ENCODE measurements at regions of chr12 and their contacts with region 1.

Region 1: DNA sequence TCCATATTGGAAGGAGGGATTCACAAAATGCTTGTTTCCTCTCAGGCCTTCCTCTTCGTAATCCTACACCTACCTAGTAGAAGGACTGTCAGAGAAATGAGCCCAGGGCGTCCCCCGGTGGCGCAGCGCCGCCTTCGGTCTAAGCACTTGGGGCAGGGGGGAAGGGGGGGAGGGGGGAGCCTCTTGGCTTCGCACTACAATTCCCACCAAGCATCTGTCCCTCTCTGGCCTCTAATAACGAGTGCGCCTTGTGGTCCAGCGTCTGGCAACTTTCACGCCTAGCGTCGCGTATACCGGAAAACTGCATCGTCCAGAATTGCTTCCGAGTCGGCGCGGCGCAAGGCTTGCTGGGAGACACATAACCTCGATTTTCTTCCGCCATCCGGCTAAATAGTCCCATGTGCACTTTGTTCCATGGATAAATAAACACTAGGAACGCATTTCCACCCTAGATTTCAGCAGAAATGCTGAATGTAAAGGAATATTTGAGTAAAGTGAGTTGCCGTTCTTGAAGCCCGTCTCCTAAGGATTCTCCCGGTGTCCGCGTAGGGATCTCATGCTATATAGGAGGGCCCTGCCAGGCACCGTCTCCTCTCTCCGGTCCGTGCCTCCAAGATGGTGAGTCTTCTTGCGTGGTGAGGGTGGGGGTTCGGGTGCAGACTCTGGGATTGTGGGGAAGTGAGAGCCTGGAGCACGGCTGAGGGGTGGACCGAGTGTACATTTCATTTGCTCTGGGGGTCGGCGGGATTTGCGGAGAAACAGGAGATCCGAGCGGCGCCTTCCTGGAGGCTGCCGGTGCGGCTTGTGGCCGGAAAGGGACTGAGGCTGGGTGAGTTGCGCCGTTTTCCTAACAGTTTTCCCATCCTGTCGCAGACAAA is at the start of gene RPS26:
- DNase-seq: peak; percentile 94
- H3K4me3 Mint-ChIP-seq: peak within 1 kb of the TSS; percentile 95
- H3K27ac Mint-ChIP-seq: peak within 1 kb of the TSS; percentile 93
- H3K4me1 Mint-ChIP-seq: peaks cover 44% of the 10 kb centered on the region
- H3K27me3 Mint-ChIP-seq: no peaks in the 10 kb centered on the region
- total RNA-seq, gene RPS26: 43.9 and 45.2 TPM in 2 replicates

Region 2: GRCh38 chr12:55817346-55818139 is 224.2 kb before region 1 on chr12 and contains the starts of genes ORMDL2 and SARNP:
- intact Hi-C with region 1: loop called (anchors 5 kb)
- DNase-seq: peak; percentile 98
- H3K4me3 Mint-ChIP-seq: no peak within 1 kb of the TSS
- H3K27ac Mint-ChIP-seq: peak within 1 kb of the TSS; percentile 43
- H3K4me1 Mint-ChIP-seq: peaks cover 28% of the 10 kb centered on the region
- H3K27me3 Mint-ChIP-seq: no peaks in the 10 kb centered on the region
- total RNA-seq, gene ORMDL2: 58.6 and 59.2 TPM in 2 replicates
- total RNA-seq, gene SARNP: 78.3 and 82.2 TPM in 2 replicates

Region 3: GRCh38 chr12:55973598-55974307 is 68.0 kb before region 1 on chr12 and contains the start of gene RAB5B:
- intact Hi-C with region 1: loop called (anchors 1 kb)
- DNase-seq: peak; percentile 99
- H3K4me3 Mint-ChIP-seq: no peak within 1 kb of the TSS
- H3K27ac Mint-ChIP-seq: no peak within 1 kb of the TSS
- H3K4me1 Mint-ChIP-seq: peaks cover 26% of the 10 kb centered on the region
- H3K27me3 Mint-ChIP-seq: no peaks in the 10 kb centered on the region
- total RNA-seq, gene RAB5B: 47.9 and 51.0 TPM in 2 replicates

Region 4: GRCh38 chr12:56020423-56021184 is 21.2 kb before region 1 on chr12 and contains the start of gene IKZF4:
- intact Hi-C with region 1: loop called (anchors 1 kb)
- DNase-seq: no peak
- H3K4me3 Mint-ChIP-seq: peak within 1 kb of the TSS; percentile 95
- H3K27ac Mint-ChIP-seq: peak within 1 kb of the TSS; percentile 95
- H3K4me1 Mint-ChIP-seq: peaks cover 34% of the 10 kb centered on the region
- H3K27me3 Mint-ChIP-seq: no peaks in the 10 kb centered on the region
- total RNA-seq, gene IKZF4: 34.8 and 35.5 TPM in 2 replicates

Region 5: DNA sequence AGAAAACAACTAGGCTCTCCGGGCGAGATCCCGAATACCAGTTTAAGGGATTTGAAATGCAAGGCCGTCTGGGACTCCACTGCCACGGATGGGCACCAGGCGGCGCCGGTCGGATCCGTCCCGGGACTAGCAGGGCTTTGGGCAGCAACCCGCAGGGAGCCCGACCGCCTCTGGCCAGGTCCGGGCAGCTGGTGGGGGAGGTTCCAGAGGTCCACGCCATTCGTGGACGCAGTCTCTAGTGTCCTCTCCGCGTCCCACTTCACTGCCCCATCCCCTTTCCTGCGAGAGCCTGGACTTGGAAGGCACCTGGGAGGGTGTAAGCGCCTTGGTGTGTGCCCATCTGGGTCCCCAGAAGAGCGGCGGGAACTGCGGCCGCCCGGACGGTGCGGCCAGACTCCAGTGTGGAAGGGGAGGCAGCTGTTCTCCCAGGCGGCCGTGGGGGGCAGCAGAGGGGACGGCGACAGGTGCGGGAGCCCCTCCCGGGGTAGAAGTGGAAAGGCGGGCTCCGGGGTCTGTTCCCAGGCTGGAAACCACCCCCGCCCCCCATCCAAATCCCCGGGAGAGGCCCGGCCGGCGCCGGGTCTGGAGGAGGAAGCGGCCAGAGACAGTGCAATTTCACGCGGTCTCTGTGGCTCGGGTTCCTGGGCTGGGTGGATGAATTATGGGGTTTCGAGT is 37.3 kb after region 1 on chr12:
- intact Hi-C with region 1: loop called (anchors 2 kb)
- DNase-seq: peak; percentile 37
- H3K4me3 Mint-ChIP-seq: peak overlapping the region; percentile 68
- H3K27ac Mint-ChIP-seq: no peak overlapping the region
- H3K4me1 Mint-ChIP-seq: peaks cover 2% of the 10 kb centered on the region
- H3K27me3 Mint-ChIP-seq: peaks cover 31% of the 10 kb centered on the region

Region 6: DNA sequence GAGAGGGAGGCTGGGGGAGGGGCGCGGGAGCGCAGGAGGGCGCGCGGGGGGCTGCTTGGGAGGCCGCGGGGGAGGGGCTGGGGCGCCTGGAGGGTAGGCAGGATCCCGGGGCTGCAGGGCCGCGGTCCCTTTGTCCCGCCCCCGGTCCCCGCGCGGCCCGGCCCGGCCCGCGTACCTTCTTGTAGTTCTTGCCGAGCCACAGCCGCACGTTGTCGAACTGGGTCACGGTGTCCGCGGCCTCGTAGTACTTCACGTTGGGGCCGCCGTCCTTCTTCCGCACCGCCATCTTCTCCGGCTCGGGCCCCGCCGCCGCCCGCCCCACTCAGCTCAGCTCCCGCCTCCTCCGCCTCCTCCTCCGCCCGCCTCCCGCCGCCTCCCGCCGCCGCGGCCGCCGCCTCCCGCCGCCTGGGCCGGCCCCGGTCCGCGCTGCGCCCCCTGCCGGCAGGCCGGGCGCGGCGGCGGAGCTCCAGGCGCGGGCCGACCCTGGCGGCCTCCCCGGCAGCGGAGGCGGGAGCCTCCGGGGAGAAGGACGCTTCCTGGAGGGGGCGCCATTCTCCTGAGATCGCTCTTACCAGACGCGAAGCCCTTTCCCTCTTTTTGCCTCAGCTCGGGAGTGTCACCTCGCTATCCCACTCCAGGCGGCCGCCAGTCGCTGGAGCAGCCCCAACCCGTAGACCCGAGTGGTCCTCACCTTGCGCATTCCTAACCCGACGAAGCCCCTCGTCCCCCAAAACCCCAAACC is 147.6 kb after region 1 on chr12 and contains the start of gene SMARCC2:
- intact Hi-C with region 1: loop called (anchors 10 kb)
- DNase-seq: peak; percentile 81
- H3K4me3 Mint-ChIP-seq: peak within 1 kb of the TSS; percentile 98
- H3K27ac Mint-ChIP-seq: peak within 1 kb of the TSS; percentile 98
- H3K4me1 Mint-ChIP-seq: peaks cover 38% of the 10 kb centered on the region
- H3K27me3 Mint-ChIP-seq: no peaks in the 10 kb centered on the region
- total RNA-seq, gene SMARCC2: 131 and 136 TPM in 2 replicates